ENCODE measurements at regions of chr11 and their contacts with region 1.

Region 1: DNA sequence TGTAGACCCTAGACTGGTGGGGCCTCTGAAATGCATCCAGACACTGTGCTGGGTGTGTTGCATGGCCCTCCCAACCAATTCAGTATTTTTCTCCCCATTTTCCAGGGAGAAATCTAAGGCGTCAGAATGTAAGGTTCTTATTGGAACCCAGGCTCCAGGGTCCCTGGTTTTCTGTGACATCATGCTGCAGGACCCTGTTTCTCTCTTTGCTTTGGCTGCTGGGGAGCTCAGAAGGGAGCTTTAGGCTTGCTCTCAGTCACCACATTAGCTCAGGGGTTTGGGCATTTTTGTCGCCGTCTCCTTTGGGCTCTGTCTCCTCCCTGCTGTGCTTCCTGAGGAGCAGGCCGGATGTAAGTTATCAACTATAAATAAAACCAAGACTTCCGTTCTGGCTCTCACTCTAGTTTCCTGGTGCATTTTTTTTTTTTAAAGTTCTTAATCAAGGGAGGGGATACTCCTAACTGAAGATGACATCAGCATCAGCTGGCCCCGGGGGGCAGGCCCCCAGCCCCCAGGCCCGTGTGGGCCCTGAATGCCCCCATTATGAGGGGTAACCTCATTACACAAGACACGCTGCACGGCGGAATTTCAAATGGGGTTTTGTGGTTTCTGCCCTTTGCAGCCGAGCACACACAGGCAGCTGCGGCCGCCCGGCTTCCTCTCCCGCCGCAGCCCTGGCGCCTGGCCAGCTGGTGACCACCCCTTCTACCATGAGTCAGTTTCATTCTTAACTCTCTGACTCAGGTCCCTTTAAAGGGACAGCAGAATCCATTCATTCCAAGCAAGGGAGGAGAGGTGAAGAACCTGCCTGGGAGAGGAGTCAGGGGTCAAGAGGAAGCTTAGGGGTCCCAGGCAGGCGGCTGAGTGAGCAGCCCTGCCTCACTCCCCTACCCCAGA is 3.2 kb downstream of the MYEOV start:
- DNase-seq: peak; percentile 48 to 86 (median 63)
- ATAC-seq: peak; percentile 68
- H3K4me3 ChIP-seq: peak overlapping the region; percentile 39
- H3K4me3 Mint-ChIP-seq: peak overlapping the region; percentile 35 to 90 (median 87)
- H3K27ac ChIP-seq: peak overlapping the region; percentile 49
- H3K27ac Mint-ChIP-seq: peak overlapping the region; percentile 4 to 93 (median 86)
- H3K4me1 ChIP-seq: peaks cover 36 to 37% of the 10 kb centered on the region in 2 donors
- H3K4me1 Mint-ChIP-seq: peaks cover 33 to 68% (median 56%) of the 10 kb centered on the region in 7 donors
- H3K27me3 ChIP-seq: no peaks in the 10 kb centered on the region
- H3K27me3 Mint-ChIP-seq: no peaks in the 10 kb centered on the region

Region 2: DNA sequence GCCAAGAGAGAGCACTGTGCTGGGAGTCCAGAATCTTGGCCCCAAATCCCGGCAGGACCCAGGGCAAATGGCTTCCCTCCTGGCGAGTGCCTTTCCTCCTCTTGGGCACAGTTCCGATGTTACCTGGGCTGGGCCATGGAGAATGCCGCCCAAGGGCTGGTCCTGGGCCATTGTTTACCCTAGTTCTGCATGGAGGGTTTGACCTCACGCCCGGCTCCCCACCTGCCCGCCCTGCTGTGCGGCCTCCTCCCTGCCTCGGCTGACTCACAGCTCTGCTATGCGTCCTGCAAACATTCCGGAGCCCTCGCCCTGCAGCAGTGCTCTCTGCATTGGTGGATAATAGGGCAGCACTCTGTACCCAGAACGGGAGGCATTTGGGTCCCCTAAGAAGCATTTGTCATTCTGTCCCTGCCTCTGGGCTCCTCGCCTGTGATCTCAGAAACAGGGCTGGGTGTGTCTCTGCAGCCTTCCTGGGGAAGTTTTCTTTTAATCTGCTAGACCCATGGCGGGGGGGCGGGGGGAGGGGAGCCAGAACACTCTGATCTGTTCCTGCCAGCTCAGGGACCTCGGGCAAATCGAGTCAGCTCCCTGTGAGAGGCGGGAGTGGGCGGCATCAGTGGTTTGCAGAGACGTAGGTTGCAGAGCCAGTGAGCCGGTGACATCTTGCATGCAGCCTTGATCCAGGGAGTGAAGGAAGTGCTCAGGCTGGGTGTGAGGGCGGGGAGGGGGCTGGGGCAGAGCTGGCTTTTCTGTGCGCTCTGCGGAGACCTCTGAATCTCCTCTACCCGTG is 174.3 kb before region 1 on chr11:
- CTCF ChIA-PET with region 1: no interaction called
- POLR2A ChIA-PET with region 1: no interaction called
- intact Hi-C with region 1: loop called in 1 of 2 experiments (anchors 2 kb)
- DNase-seq: peak in 8 of 9 donors; percentile 51 to 78 (median 60)
- ATAC-seq: peak; percentile 85
- H3K4me3 ChIP-seq: peak overlapping the region; percentile 53
- H3K4me3 Mint-ChIP-seq: peak overlapping the region; percentile 69 to 86 (median 81)
- H3K27ac ChIP-seq: peak overlapping the region; percentile 76
- H3K27ac Mint-ChIP-seq: peak overlapping the region; percentile 80 to 94 (median 88)
- H3K4me1 ChIP-seq: peaks cover 4 to 42% of the 10 kb centered on the region in 2 donors
- H3K4me1 Mint-ChIP-seq: peaks cover 24 to 57% (median 40%) of the 10 kb centered on the region in 7 donors
- H3K27me3 ChIP-seq: no peaks in the 10 kb centered on the region
- H3K27me3 Mint-ChIP-seq: no peaks in the 10 kb centered on the region

Region 3: GRCh38 chr11:69337211-69337721 is 40.1 kb after region 1 on chr11:
- CTCF ChIA-PET with region 1: no interaction called
- POLR2A ChIA-PET with region 1: no interaction called
- intact Hi-C with region 1: loop called (anchors 1 to 5 kb)
- DNase-seq: peak in 8 of 9 donors; percentile 29 to 65 (median 46)
- ATAC-seq: peak; percentile 81
- H3K4me3 ChIP-seq: peak overlapping the region; percentile 28
- H3K4me3 Mint-ChIP-seq: peak overlapping the region; percentile 49 to 80 (median 72)
- H3K27ac ChIP-seq: peak overlapping the region; percentile 66
- H3K27ac Mint-ChIP-seq: peak overlapping the region; percentile 76 to 94 (median 88)
- H3K4me1 ChIP-seq: peaks cover 12 to 28% of the 10 kb centered on the region in 2 donors
- H3K4me1 Mint-ChIP-seq: peaks cover 21 to 53% (median 42%) of the 10 kb centered on the region in 7 donors
- H3K27me3 ChIP-seq: no peaks in the 10 kb centered on the region
- H3K27me3 Mint-ChIP-seq: peaks cover 0 to under 1% (median 0%) of the 10 kb centered on the region in 5 donors

Region 4: GRCh38 chr11:69351460-69351859 is 54.3 kb after region 1 on chr11:
- CTCF ChIA-PET with region 1: no interaction called
- POLR2A ChIA-PET with region 1: no interaction called
- intact Hi-C with region 1: no loop called
- DNase-seq: no peak
- ATAC-seq: no peak
- H3K4me3 ChIP-seq: no peak overlapping the region
- H3K4me3 Mint-ChIP-seq: no peak overlapping the region
- H3K27ac ChIP-seq: no peak overlapping the region
- H3K27ac Mint-ChIP-seq: no peak overlapping the region
- H3K4me1 ChIP-seq: no peaks in the 10 kb centered on the region
- H3K4me1 Mint-ChIP-seq: peaks cover 0 to 6% (median 0%) of the 10 kb centered on the region in 7 donors
- H3K27me3 ChIP-seq: no peaks in the 10 kb centered on the region
- H3K27me3 Mint-ChIP-seq: peaks cover 0 to 6% (median 4%) of the 10 kb centered on the region in 5 donors

Region 5: GRCh38 chr11:69443138-69443967 is 146.2 kb after region 1 on chr11:
- CTCF ChIA-PET with region 1: no interaction called
- POLR2A ChIA-PET with region 1: no interaction called
- intact Hi-C with region 1: loop called (anchors 5 to 10 kb)
- DNase-seq: peak; percentile 33 to 79 (median 54)
- ATAC-seq: peak; percentile 89
- H3K4me3 ChIP-seq: peak overlapping the region; percentile 31
- H3K4me3 Mint-ChIP-seq: peak overlapping the region; percentile 16 to 78 (median 68)
- H3K27ac ChIP-seq: peak overlapping the region; percentile 14
- H3K27ac Mint-ChIP-seq: no peak overlapping the region
- H3K4me1 ChIP-seq: peaks cover 5 to 7% of the 10 kb centered on the region in 2 donors
- H3K4me1 Mint-ChIP-seq: peaks cover 0 to 17% (median 6%) of the 10 kb centered on the region in 7 donors
- H3K27me3 ChIP-seq: no peaks in the 10 kb centered on the region
- H3K27me3 Mint-ChIP-seq: peaks cover 0 to 11% (median 8%) of the 10 kb centered on the region in 5 donors

Region 6: DNA sequence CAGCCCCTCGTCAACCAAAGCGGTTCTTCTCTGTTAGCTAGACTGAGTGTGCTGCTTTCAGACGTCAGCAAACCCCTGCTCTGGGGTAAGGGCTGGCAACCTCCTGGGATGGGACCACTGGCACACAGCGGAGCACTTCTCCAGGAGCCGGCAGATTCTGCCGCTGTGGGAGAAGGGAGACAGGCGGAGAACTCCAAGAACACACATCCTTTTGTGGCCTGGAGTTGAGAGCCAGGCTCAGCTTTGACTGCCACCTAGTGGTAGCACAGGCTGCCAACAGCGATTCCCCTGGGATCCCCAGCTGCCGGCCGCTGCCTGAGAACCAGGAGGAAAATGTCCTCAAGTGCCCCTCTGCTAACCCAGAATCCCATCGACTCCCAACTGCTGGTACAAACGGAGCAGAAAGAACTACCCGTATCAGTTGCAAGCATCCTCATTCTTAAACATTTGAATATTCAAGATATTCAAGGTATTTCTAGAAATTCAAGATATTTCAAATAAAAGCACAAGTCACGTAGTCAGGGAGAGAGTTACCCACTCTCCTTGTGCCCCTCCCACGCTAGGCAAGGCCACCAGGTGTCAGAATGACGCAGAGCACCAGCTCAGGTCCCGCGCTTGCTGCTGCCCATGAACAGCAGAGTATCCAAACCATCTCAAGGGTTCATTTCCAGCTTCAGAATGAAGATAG is 373.2 kb after region 1 on chr11:
- CTCF ChIA-PET with region 1: interaction called, 4 read pairs
- POLR2A ChIA-PET with region 1: interaction called, 3 read pairs
- intact Hi-C with region 1: loop called in 1 of 2 experiments (anchors 1 kb)
- DNase-seq: peak; percentile 25 to 57 (median 43)
- ATAC-seq: peak; percentile 36
- H3K4me3 ChIP-seq: no peak overlapping the region
- H3K4me3 Mint-ChIP-seq: no peak overlapping the region
- H3K27ac ChIP-seq: no peak overlapping the region
- H3K27ac Mint-ChIP-seq: peak overlapping the region in 6 of 9 donors; percentile 5 to 84 (median 65)
- H3K4me1 ChIP-seq: peaks cover 15 to 19% of the 10 kb centered on the region in 2 donors
- H3K4me1 Mint-ChIP-seq: peaks cover 24 to 42% (median 33%) of the 10 kb centered on the region in 7 donors
- H3K27me3 ChIP-seq: no peaks in the 10 kb centered on the region
- H3K27me3 Mint-ChIP-seq: peaks cover 0 to under 1% (median 0%) of the 10 kb centered on the region in 5 donors

Measured in naive thymus-derived CD4-positive, alpha-beta T cell (primary cell).